ENCODE measurements at regions of chr9 and their contacts with region 1.

Region 1: GRCh38 chr9:121545875-121546423 is 46.3 kb upstream of the GGTA1 start:
- DNase-seq: peak; percentile 94
- ATAC-seq: peak; percentile 99
- H3K4me3 ChIP-seq: no peak overlapping the region
- H3K27ac ChIP-seq: no peak overlapping the region
- H3K4me1 ChIP-seq: no peaks in the 10 kb centered on the region
- H3K27me3 ChIP-seq: peaks cover 9% of the 10 kb centered on the region
- CTCF ChIP-seq: peak; percentile 98
- POLR2A ChIP-seq: no peak
- RAD21 ChIP-seq: peak; percentile 97

Region 2: DNA sequence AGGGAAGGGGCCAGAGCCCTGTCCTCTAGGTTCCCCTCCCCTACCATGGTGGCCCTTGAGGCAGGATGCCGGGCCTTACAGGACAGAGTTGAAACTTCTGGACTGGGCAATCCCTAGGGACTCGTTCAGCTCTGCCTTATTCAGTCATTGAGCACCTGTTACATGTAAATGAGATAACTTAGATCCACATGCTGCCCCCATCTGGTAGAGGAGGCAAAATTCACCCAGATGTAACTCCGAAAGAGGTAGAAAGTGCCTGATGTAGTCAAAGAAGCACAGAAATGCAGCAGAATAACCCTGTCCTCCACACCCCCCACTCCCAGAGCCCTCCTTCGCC is 47.8 kb before region 1 on chr9:
- CTCF ChIA-PET with region 1: no interaction called
- POLR2A ChIA-PET with region 1: no interaction called
- dilution Hi-C with region 1: no loop called
- in situ Hi-C with region 1: no loop called
- intact Hi-C with region 1: loop called (anchors 1 kb)
- DNase-seq: peak; percentile 72
- ATAC-seq: peak; percentile 60
- H3K4me3 ChIP-seq: no peak overlapping the region
- H3K27ac ChIP-seq: no peak overlapping the region
- H3K4me1 ChIP-seq: peaks cover 5% of the 10 kb centered on the region; the same call in 1 of the 2 replicates
- H3K27me3 ChIP-seq: peaks cover 38% of the 10 kb centered on the region
- CTCF ChIP-seq: peak; percentile 60
- POLR2A ChIP-seq: no peak
- RAD21 ChIP-seq: peak; percentile 27; the same call in 1 of the 2 replicates

Region 3: DNA sequence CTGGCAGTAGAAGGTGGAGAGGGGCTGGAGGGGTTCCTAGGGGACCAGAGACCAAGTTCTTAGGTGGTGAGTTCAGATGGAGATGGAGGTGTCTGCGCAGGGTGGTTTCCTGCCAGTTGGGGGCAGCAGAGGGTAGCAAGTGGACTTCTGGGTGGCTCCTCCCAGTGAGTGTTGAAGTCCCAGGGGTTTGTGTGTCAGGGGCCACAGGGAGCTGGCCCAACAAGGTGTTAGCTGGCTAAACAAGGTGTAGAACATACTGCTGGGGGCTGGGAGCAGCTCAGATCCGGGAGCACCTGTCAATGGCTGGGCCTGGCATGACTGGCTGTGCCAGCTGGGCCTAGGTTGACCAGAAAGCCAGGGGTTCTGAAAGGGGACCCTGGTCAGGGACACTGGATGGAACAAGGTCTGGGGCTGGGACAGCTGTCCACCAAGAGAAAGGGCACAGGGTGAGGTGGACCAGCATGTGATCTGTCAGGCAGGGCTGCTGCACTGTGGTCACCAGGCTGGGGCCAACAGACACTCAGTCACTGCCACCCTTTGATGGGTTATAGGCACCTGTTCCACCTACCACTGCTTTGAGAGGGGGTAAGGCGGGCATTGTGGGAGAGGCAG is 141.1 kb after region 1 on chr9:
- CTCF ChIA-PET with region 1: interaction called, 10 read pairs
- POLR2A ChIA-PET with region 1: no interaction called
- dilution Hi-C with region 1: no loop called
- in situ Hi-C with region 1: loop called (anchors 5 kb)
- intact Hi-C with region 1: loop called (anchors 1 kb)
- DNase-seq: peak; percentile 65
- ATAC-seq: peak; percentile 92
- H3K4me3 ChIP-seq: no peak overlapping the region
- H3K27ac ChIP-seq: no peak overlapping the region
- H3K4me1 ChIP-seq: peaks cover 5% of the 10 kb centered on the region; the same call in 1 of the 2 replicates
- H3K27me3 ChIP-seq: no peaks in the 10 kb centered on the region
- CTCF ChIP-seq: peak; percentile 92
- POLR2A ChIP-seq: no peak
- RAD21 ChIP-seq: peak; percentile 96

Region 4: GRCh38 chr9:121992571-121993212 is 446.7 kb after region 1 on chr9:
- CTCF ChIA-PET with region 1: interaction called, 5 read pairs
- POLR2A ChIA-PET with region 1: no interaction called
- dilution Hi-C with region 1: no loop called
- in situ Hi-C with region 1: loop called (anchors 5 kb)
- intact Hi-C with region 1: loop called (anchors 1 kb)
- DNase-seq: peak; percentile 82
- ATAC-seq: peak; percentile 88
- H3K4me3 ChIP-seq: no peak overlapping the region
- H3K27ac ChIP-seq: no peak overlapping the region
- H3K4me1 ChIP-seq: peaks cover 5% of the 10 kb centered on the region; the same call in 1 of the 2 replicates
- H3K27me3 ChIP-seq: no peaks in the 10 kb centered on the region
- CTCF ChIP-seq: peak; percentile 84
- POLR2A ChIP-seq: no peak
- RAD21 ChIP-seq: peak; percentile 89

Region 5: DNA sequence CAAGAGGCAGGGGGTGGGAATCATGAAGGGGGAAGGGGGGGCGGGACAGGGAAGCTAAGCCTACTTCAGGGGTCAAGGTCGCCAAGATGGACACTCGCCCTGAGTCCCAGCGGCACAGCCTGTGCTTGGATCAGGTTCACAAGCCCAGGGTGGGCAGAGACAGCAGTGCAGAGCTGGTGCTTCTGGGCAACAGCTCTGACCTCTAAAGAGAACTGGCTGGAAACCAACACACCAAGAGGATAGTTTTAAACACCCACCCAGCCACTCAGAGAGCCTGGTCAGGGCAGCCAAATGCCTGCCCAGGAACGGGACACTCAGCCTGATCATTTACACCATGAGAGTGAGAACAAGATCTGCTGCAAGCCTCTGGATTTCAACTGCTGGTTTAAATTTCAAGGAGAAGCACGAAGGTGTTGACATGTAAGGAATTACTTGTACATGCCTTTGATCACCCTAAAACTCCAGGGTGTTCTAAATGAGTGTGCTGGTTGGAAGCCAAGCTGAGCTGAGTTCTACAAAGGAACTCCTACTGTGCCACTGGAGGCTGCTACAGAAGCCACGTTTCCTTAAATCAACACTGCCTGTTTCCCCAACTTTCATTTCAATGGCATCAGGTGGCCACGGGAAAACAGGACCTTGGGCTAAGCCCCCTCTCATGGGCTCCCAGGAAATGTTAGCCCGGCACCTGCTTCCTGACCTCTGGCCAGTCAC is 455.7 kb after region 1 on chr9:
- CTCF ChIA-PET with region 1: interaction called, 4 read pairs
- POLR2A ChIA-PET with region 1: no interaction called
- dilution Hi-C with region 1: no loop called
- in situ Hi-C with region 1: loop called (anchors 5 kb)
- intact Hi-C with region 1: no loop called
- DNase-seq: peak; percentile 24
- ATAC-seq: peak; percentile 24
- H3K4me3 ChIP-seq: no peak overlapping the region
- H3K27ac ChIP-seq: no peak overlapping the region
- H3K4me1 ChIP-seq: peaks cover 12% of the 10 kb centered on the region
- H3K27me3 ChIP-seq: no peaks in the 10 kb centered on the region
- CTCF ChIP-seq: no peak
- POLR2A ChIP-seq: no peak
- RAD21 ChIP-seq: no peak

Region 6: GRCh38 chr9:122099271-122099869 is 553.4 kb after region 1 on chr9:
- CTCF ChIA-PET with region 1: interaction called, 4 read pairs
- POLR2A ChIA-PET with region 1: no interaction called
- dilution Hi-C with region 1: no loop called
- in situ Hi-C with region 1: no loop called
- intact Hi-C with region 1: loop called (anchors 5 kb)
- DNase-seq: peak; percentile 74
- ATAC-seq: peak; percentile 89
- H3K4me3 ChIP-seq: no peak overlapping the region
- H3K27ac ChIP-seq: no peak overlapping the region
- H3K4me1 ChIP-seq: no peaks in the 10 kb centered on the region; the same call in 1 of the 2 replicates
- H3K27me3 ChIP-seq: peaks cover 3% of the 10 kb centered on the region
- CTCF ChIP-seq: peak; percentile 86
- POLR2A ChIP-seq: no peak
- RAD21 ChIP-seq: peak; percentile 82

Region 7: GRCh38 chr9:122125158-122125508 is 579.2 kb after region 1 on chr9:
- CTCF ChIA-PET with region 1: interaction called, 6 read pairs
- POLR2A ChIA-PET with region 1: no interaction called
- dilution Hi-C with region 1: no loop called
- in situ Hi-C with region 1: no loop called
- intact Hi-C with region 1: loop called (anchors 1 kb)
- DNase-seq: peak; percentile 76
- ATAC-seq: peak; percentile 79
- H3K4me3 ChIP-seq: no peak overlapping the region
- H3K27ac ChIP-seq: no peak overlapping the region
- H3K4me1 ChIP-seq: peaks cover 13% of the 10 kb centered on the region
- H3K27me3 ChIP-seq: no peaks in the 10 kb centered on the region; the same call in 1 of the 2 replicates
- CTCF ChIP-seq: peak; percentile 99
- POLR2A ChIP-seq: peak; percentile 70; the same call in 1 of the 2 replicates
- RAD21 ChIP-seq: peak; percentile 99

Measured in IMR-90 (cell line).